Posterior vena cava (tissue), 2 donors: ENCODE measurements at regions of chr2 and their contacts with region 1.

Region 1: DNA sequence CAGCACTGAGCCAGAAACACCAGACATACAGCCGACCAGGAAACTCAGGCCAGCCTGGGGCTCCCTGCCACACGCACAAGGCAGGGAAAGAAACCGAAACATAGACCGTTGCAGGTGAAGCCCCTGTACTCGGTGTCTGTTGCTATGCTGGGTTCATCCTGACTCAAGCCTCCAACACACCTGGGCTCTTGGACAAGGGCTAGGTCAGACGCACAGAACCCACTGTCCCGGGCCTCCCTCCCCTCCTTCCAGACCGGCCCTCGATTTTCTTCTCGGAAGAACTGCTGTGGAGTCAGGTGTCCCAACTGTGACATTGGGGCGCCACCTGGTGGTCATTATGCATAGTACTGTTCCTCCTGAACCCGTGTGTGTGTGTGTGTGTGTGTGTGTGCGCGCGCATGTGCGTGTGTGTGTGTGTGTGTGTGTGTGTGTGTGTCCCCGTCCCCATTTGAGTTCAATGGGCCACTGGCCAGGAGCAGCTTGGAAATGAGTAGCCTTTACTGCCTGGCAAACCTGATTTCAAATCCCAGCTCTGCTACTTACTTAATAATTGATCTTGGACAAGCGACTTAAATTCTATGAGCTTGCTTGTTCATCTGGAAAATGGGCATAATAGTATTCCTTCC is 55.4 kb upstream of the GLI2 start:
- DNase-seq: peak; percentile 93

Region 2: GRCh38 chr2:120552800-120553481 is 127.3 kb before region 1 on chr2:
- intact Hi-C with region 1: loop called in 1 of 2 experiments (anchors 5 kb)
- DNase-seq: peak; percentile 91